Gastrocnemius medialis (tissue), 4 donors: ENCODE measurements at regions of chr18 and their contacts with region 1.

Region 1: DNA sequence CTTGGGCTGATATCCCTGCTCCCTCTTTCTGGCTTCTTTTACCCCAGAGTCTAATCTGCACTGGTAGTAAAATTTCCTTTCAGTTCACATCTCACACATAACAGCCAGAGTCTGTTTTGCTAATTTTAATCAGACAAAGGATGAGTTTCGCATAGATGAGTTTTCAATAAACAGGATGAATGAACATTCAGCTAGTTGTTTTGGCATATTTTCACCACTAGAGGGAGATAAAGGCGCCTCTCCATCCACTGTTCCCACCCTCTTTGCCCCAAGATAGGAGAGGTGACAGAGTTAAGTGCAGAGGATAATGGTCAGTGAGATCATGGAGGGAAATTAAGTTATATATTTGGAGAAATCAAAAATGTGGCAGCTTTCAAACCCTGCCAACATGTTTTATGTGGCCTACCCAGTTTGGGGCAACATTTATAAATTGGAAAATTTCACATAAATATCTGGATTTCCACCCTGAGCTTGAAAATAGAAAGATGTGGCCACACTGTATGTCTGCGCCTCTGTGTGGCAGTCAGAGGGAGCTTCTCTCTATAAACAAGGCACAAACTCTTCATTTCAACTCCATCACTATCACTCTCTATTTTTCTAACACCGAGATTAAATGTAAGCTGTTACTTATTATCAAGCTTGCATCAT is 48.5 kb upstream of the DTNA start:
- DNase-seq: no peak
- ATAC-seq: peak; percentile 35 to 46
- H3K4me3 ChIP-seq: no peak overlapping the region
- H3K27ac ChIP-seq: peak overlapping the region; percentile 52 to 91 (median 86)
- H3K4me1 ChIP-seq: peaks cover 29 to 38% of the 10 kb centered on the region in 2 donors
- H3K27me3 ChIP-seq: no peaks in the 10 kb centered on the region
- CTCF ChIP-seq: peak; percentile 71 to 82 (median 77)
- POLR2A ChIP-seq: no peak

Region 2: GRCh38 chr18:34493099-34493544 is 168.5 kb before region 1 on chr18:
- in situ Hi-C with region 1: no loop called
- intact Hi-C with region 1: loop called (anchors 5 kb)
- DNase-seq: peak; percentile 63 to 85
- ATAC-seq: peak; percentile 87 to 88
- H3K4me3 ChIP-seq: peak overlapping the region; percentile 69 to 79 (median 72)
- H3K27ac ChIP-seq: peak overlapping the region; percentile 82 to 94 (median 92)
- H3K4me1 ChIP-seq: peaks cover 19 to 20% of the 10 kb centered on the region in 2 donors
- H3K27me3 ChIP-seq: no peaks in the 10 kb centered on the region
- CTCF ChIP-seq: no peak
- POLR2A ChIP-seq: no peak

Region 3: DNA sequence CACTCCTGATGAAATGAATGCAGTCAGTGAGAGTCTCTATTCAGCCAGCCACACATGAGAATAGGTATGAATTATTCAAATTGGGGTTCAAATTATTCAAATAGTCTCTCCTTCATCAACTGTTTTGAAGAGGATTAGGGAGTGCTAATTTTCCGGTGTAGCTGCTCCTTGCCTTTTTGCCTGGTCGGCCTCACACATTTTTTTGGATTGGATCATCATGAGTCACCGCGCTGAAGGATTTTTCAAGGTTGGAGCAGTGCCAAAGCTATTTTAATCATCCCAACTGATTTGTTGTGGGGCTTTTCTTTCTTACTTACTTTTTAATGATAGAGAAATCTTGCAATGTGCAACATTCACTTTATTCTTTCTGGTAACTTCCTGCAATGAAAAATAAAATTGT is 46.1 kb after region 1 on chr18:
- in situ Hi-C with region 1: no loop called
- intact Hi-C with region 1: loop called (anchors 5 kb)
- DNase-seq: peak; percentile 50 to 57
- ATAC-seq: peak; percentile 61 to 72
- H3K4me3 ChIP-seq: peak overlapping the region in 3 of 4 donors; percentile 0 to 22 (median 14)
- H3K27ac ChIP-seq: peak overlapping the region; percentile 59 to 82 (median 78)
- H3K4me1 ChIP-seq: peaks cover 44 to 51% of the 10 kb centered on the region in 2 donors
- H3K27me3 ChIP-seq: no peaks in the 10 kb centered on the region
- CTCF ChIP-seq: no peak
- POLR2A ChIP-seq: no peak

Region 4: GRCh38 chr18:34837769-34838272 is 176.2 kb after region 1 on chr18:
- in situ Hi-C with region 1: no loop called
- intact Hi-C with region 1: loop called (anchors 5 kb)
- DNase-seq: peak; percentile 40 to 60
- ATAC-seq: peak; percentile 86 to 90
- H3K4me3 ChIP-seq: peak overlapping the region; percentile 22 to 38 (median 32)
- H3K27ac ChIP-seq: peak overlapping the region; percentile 82 to 89 (median 86)
- H3K4me1 ChIP-seq: peaks cover 47 to 56% of the 10 kb centered on the region in 2 donors
- H3K27me3 ChIP-seq: no peaks in the 10 kb centered on the region
- CTCF ChIP-seq: no peak
- POLR2A ChIP-seq: no peak